ENCODE measurements at regions of chr9 and their contacts with region 1.

Region 1: DNA sequence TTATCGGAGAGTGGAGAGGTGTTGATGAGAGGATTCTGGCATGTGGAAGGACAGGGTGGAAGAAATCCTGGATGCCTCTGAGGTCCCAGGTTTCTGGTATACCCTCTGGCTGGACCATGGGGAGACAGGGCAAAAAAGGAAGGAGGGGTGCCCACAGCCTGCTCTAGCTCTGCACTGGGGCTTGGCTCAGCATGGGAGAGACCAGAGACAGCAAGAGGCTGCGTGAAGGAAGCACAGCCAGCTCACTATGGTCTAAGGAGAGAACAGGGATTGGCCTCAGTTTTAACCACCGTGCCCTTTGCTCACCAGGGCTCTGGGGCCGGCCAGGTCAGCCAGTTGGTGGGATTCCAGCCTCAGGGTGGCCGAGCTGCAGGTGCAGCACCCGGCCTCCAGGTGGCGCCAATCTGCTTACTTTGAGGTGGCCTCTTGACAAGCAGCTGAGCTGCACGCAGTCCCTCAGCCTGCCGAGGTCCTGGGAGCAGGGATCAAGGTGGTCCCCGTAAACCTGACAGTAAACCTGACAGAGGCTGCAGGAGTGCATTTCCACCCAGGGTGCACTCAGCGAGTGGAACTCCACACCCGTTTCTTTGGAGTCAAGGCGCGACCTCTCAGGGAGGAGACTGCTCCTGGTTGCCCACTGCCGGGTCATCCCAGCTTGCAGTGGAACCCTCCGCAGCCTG is 25.0 kb upstream of the SPTLC1 start:
- DNase-seq: peak; percentile 65
- ATAC-seq: peak; percentile 55
- H3K4me3 ChIP-seq: peak overlapping the region; percentile 65
- H3K27ac ChIP-seq: peak overlapping the region; percentile 92
- H3K4me1 ChIP-seq: peaks cover 35% of the 10 kb centered on the region
- H3K27me3 ChIP-seq: no peaks in the 10 kb centered on the region
- CTCF ChIP-seq: peak; percentile 92
- POLR2A ChIP-seq: no peak
- RAD21 ChIP-seq: peak; percentile 86

Region 2: GRCh38 chr9:92029553-92029952 is 110.7 kb before region 1 on chr9:
- CTCF ChIA-PET with region 1: no interaction called
- POLR2A ChIA-PET with region 1: no interaction called
- dilution Hi-C with region 1: no loop called
- in situ Hi-C with region 1: no loop called
- intact Hi-C with region 1: no loop called
- DNase-seq: no peak
- ATAC-seq: no peak
- H3K4me3 ChIP-seq: no peak overlapping the region
- H3K27ac ChIP-seq: no peak overlapping the region
- H3K4me1 ChIP-seq: peaks cover 7% of the 10 kb centered on the region; the same call in 1 of the 2 replicates
- H3K27me3 ChIP-seq: no peaks in the 10 kb centered on the region
- CTCF ChIP-seq: 0 out of 2 replicates have a peak, but pooled peaks have one; percentile 18
- POLR2A ChIP-seq: no peak
- RAD21 ChIP-seq: 0 out of 2 replicates have a peak, but pooled peaks have one; percentile 14

Region 3: GRCh38 chr9:92064711-92065110 is 75.5 kb before region 1 on chr9:
- CTCF ChIA-PET with region 1: no interaction called
- POLR2A ChIA-PET with region 1: no interaction called
- dilution Hi-C with region 1: no loop called
- in situ Hi-C with region 1: no loop called
- intact Hi-C with region 1: no loop called
- DNase-seq: peak; percentile 73
- ATAC-seq: peak; percentile 79
- H3K4me3 ChIP-seq: no peak overlapping the region
- H3K27ac ChIP-seq: peak overlapping the region; percentile 51; the same call in 1 of the 2 replicates
- H3K4me1 ChIP-seq: peaks cover 12% of the 10 kb centered on the region
- H3K27me3 ChIP-seq: no peaks in the 10 kb centered on the region
- CTCF ChIP-seq: no peak
- POLR2A ChIP-seq: no peak
- RAD21 ChIP-seq: no peak

Region 4: DNA sequence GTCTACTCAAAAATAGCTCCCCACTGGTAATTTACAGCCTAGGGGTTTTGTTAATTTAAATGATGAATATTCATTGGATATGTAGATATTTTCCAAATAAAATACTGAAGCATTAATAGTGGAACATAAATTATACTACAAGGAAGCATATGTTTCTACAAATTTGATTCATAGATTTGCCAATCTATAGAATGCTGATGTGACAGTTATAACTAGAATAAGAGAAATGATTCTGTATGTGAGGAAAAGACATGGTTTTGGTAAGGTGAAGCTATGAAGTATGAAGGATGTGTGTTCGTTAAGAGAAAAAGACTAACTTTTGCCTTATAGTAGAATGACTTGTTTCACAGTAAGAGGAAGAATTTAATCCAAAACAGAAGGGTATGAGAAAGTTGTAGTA is 92.0 kb after region 1 on chr9:
- CTCF ChIA-PET with region 1: interaction called, 13 read pairs
- POLR2A ChIA-PET with region 1: no interaction called
- dilution Hi-C with region 1: no loop called
- in situ Hi-C with region 1: no loop called
- intact Hi-C with region 1: no loop called
- DNase-seq: no peak
- ATAC-seq: no peak
- H3K4me3 ChIP-seq: no peak overlapping the region
- H3K27ac ChIP-seq: no peak overlapping the region
- H3K4me1 ChIP-seq: no peaks in the 10 kb centered on the region
- H3K27me3 ChIP-seq: no peaks in the 10 kb centered on the region
- CTCF ChIP-seq: no peak
- POLR2A ChIP-seq: no peak
- RAD21 ChIP-seq: no peak

Region 5: DNA sequence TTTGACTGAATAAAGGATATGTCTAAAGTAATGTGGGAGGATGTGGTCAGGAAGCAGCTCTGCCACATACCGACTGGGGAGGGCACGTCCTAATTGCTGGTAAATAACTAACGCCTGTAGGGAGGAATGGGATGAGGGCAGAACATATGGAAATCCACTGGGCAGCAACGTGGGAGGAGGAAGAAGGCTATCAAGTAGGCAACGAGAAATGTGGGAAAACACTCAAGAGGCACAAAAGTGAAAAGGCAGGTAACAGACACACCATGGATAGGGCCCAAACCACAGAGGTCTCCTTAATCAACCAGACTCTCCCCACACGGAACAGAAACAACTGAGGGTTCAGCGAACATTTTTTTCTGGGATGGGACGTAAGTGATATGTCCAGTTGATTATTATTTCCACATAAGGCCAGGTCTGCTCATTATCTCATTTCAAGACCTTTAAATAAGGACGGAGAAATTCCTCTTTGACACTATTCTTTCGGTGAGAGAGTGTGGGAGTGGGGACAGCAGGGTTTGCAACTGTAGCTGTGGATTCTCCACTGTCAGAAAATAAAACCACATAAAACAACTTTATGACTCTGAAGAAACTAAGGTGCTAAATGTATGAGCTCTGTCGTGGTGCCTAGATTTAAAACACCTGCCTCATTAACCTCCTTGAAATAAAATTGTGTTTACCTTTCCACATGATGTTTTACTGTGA is 136.3 kb after region 1 on chr9:
- CTCF ChIA-PET with region 1: interaction called, 11 read pairs
- POLR2A ChIA-PET with region 1: no interaction called
- dilution Hi-C with region 1: no loop called
- in situ Hi-C with region 1: no loop called
- intact Hi-C with region 1: no loop called
- DNase-seq: no peak
- ATAC-seq: no peak
- H3K4me3 ChIP-seq: no peak overlapping the region
- H3K27ac ChIP-seq: no peak overlapping the region
- H3K4me1 ChIP-seq: peaks cover 2% of the 10 kb centered on the region
- H3K27me3 ChIP-seq: no peaks in the 10 kb centered on the region
- CTCF ChIP-seq: no peak
- POLR2A ChIP-seq: no peak
- RAD21 ChIP-seq: no peak

Measured in IMR-90 (cell line).